ENCODE measurements at regions of chr6 and their contacts with region 1.

Region 1: GRCh38 chr6:97186416-97186999 is 96.5 kb downstream of the MMS22L start:
- DNase-seq: no peak
- H3K4me3 ChIP-seq: no peak overlapping the region
- CTCF ChIP-seq: peak; percentile 89

Region 2: GRCh38 chr6:97160280-97160679 is 26.2 kb before region 1 on chr6:
- CTCF ChIA-PET with region 1: interaction called, 10 read pairs
- POLR2A ChIA-PET with region 1: no interaction called
- DNase-seq: no peak
- H3K4me3 ChIP-seq: no peak overlapping the region
- CTCF ChIP-seq: no peak

Region 3: GRCh38 chr6:97203343-97203742 is 16.8 kb after region 1 on chr6:
- CTCF ChIA-PET with region 1: interaction called, 29 read pairs
- POLR2A ChIA-PET with region 1: no interaction called
- DNase-seq: no peak
- H3K4me3 ChIP-seq: no peak overlapping the region
- CTCF ChIP-seq: no peak

Region 4: DNA sequence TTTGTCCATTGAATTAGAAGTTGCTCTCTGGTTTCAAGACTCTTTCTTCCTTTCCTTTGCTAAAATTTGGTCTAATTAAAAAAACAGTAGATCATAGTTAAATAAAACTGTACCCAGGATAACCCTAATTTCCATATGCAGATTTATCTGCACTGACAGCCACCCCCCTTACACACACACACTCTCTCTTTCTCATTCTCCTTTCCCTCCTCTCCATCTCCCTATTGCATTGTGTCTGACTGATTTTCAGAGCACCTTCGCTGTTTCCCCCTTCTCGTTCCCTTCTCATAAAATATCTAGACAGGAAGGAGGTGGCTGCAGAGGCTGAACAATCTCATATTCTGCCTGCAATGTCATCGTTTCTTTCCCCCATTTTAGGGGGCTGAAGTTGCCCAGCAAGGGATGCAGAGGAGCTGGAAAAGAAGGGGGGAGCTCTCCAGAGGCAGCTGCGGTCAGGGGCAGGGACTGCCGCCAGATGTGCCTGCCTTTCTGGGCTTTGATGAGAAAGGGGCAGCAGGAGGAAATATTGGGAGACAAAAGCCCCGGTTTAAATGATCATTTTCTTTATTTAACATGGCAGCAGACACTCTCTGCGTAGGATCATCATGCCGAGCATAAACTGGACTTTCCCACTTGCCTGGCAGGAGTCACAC is 119.0 kb after region 1 on chr6:
- CTCF ChIA-PET with region 1: no interaction called
- POLR2A ChIA-PET with region 1: no interaction called
- DNase-seq: no peak
- H3K4me3 ChIP-seq: no peak overlapping the region
- CTCF ChIP-seq: no peak

Region 5: GRCh38 chr6:97394160-97394748 is 207.7 kb after region 1 on chr6:
- CTCF ChIA-PET with region 1: interaction called, 160 read pairs
- POLR2A ChIA-PET with region 1: no interaction called
- DNase-seq: no peak
- H3K4me3 ChIP-seq: no peak overlapping the region
- CTCF ChIP-seq: peak; percentile 73